AG04450 (cell line): ENCODE measurements at regions of chr6 and their contacts with region 1.

Region 1: GRCh38 chr6:138088330-138088766 is 18.9 kb downstream of the PERP start:
- DNase-seq: peak; percentile 87
- H3K4me3 ChIP-seq: 0 out of 2 replicates have a peak overlapping the region, but pooled peaks have one; percentile 11
- H3K27ac ChIP-seq: peak overlapping the region; percentile 86
- H3K27me3 ChIP-seq: no peaks in the 10 kb centered on the region
- CTCF ChIP-seq: no peak

Region 2: GRCh38 chr6:138007014-138007472 is 81.3 kb before region 1 on chr6:
- CTCF ChIA-PET with region 1: interaction called, 10 read pairs
- POLR2A ChIA-PET with region 1: no interaction called
- DNase-seq: no peak
- H3K4me3 ChIP-seq: no peak overlapping the region
- H3K27ac ChIP-seq: no peak overlapping the region
- H3K27me3 ChIP-seq: no peaks in the 10 kb centered on the region
- CTCF ChIP-seq: peak; percentile 77

Region 3: GRCh38 chr6:138109042-138109997 is 21.0 kb after region 1 on chr6:
- CTCF ChIA-PET with region 1: interaction called, 25 read pairs
- POLR2A ChIA-PET with region 1: interaction called, 5 read pairs
- DNase-seq: peak; percentile 13
- H3K4me3 ChIP-seq: no peak overlapping the region
- H3K27ac ChIP-seq: no peak overlapping the region
- H3K27me3 ChIP-seq: peaks cover 18% of the 10 kb centered on the region
- CTCF ChIP-seq: peak; percentile 98

Region 4: DNA sequence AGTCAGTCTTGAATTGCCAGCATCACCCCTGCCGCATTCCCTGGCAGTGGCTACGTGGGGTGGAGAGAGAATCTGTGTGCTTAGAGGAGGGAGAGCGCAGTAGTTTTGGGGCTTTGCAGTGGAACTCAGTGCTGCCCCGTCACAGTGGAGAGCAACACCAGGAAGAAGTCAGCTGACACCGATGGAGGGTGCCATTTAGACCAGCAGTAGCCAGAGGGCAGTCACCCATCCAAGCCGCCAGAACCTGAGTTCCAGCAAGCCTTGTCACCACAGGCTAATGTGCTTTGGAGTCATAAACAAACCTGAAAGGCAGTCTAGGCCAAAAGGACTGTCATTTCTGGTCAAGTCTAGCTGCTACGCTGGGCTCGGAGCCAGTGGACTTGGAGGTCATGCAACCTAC is 40.8 kb after region 1 on chr6:
- CTCF ChIA-PET with region 1: no interaction called
- POLR2A ChIA-PET with region 1: no interaction called
- DNase-seq: no peak
- H3K4me3 ChIP-seq: no peak overlapping the region
- H3K27ac ChIP-seq: no peak overlapping the region
- H3K27me3 ChIP-seq: peaks cover 6% of the 10 kb centered on the region
- CTCF ChIP-seq: no peak